SK-N-SH (cell line): ENCODE measurements at regions of chr4 and their contacts with region 1.

Region 1: DNA sequence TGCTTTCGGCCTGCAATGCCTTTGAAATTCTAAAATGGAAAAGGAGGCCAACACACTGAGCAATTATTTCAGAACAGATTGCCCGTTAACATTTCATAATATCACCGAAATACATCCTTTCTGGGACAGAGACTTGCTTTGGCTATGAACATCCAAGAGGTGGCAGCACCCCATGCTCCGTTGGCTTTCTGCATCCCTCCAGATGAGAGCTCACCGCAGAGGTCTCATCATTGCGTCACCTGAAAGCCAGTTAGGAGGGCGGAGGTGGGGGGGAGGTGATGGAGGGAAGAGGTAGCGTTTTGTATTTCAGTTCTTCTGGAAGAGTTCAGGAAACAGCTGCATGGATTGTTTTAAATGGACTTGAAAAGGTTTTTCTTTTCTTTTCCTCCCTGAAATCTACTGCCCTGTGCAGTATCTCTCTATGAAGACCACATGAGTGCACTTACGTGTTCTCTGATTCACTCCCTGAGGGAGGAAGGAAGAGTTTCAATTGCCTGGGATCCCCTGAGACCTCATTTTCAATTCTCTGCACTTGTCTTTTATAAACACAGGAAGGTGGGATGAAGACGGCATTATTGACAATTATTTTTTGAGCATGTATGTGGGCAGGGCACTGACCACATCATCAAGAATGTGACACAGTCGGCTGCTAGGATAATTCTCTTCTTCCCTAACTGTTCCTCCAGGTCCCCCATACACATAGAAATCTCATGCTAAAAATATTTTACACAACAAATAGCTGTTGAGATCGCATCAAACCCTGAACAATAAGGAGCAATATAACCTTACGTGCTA is 166.9 kb upstream of the PGRMC2 start:
- DNase-seq: peak; percentile 79
- H3K4me3 ChIP-seq: no peak overlapping the region; a peak in 1 of 4 replicates
- H3K27ac ChIP-seq: peak overlapping the region; percentile 62 to 63
- H3K4me1 ChIP-seq: peaks cover 9 to 19% of the 10 kb centered on the region in 2 experiments; a peak in 3 of 4 replicates
- H3K27me3 ChIP-seq: no peaks in the 10 kb centered on the region
- CTCF ChIP-seq: peak; percentile 92
- EP300 ChIP-seq: peak; percentile 7 to 62; a peak in 1 of 4 replicates
- RAD21 ChIP-seq: peak; percentile 94

Region 2: DNA sequence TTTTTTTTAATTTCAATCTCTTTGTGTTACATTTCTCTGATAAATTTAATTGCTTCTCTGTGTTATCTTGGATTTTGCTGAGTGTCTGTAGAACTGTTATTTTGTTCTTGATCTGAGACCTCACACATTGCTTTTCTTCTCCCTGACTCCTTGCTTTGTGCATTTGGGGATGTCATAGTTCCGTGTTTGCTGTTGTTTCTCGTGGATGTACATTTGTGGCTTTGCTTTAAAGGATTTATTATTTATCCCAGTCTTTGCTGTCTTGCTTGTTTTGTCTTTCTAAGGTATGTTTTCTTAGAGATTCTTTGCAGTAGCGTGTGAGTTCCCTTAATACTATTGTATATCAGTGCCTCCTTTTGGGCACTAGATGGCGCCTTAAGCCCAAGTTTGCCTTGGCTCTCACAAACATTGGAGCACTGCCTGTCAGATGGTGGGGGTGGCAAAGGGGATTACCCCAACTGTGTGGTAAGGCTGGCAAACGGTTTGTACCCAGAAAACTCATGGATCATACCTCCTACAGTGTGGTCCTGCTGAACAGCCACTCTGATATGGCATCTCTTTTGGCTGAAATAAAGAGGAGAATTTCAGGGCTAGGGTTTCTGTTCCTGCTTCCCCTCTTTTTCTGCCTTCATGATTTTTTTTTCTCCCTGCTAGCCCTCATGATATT is 263.2 kb before region 1 on chr4:
- CTCF ChIA-PET with region 1: interaction called, 10 read pairs
- POLR2A ChIA-PET with region 1: no interaction called
- DNase-seq: peak; percentile 63
- H3K4me3 ChIP-seq: peak overlapping the region in 1 of 2 experiments; percentile 31; a peak in 1 of 4 replicates
- H3K27ac ChIP-seq: no peak overlapping the region
- H3K4me1 ChIP-seq: peaks cover 0 to 7% of the 10 kb centered on the region in 2 experiments; a peak in 3 of 4 replicates
- H3K27me3 ChIP-seq: no peaks in the 10 kb centered on the region
- CTCF ChIP-seq: peak; percentile 95
- EP300 ChIP-seq: no peak
- RAD21 ChIP-seq: peak; percentile 95

Region 3: GRCh38 chr4:128386761-128387599 is 67.5 kb before region 1 on chr4:
- CTCF ChIA-PET with region 1: interaction called, 12 read pairs
- POLR2A ChIA-PET with region 1: no interaction called
- DNase-seq: peak; percentile 67
- H3K4me3 ChIP-seq: no peak overlapping the region; a peak in 2 of 4 replicates
- H3K27ac ChIP-seq: peak overlapping the region; percentile 86 to 99
- H3K4me1 ChIP-seq: peaks cover 38 to 44% of the 10 kb centered on the region in 2 experiments
- H3K27me3 ChIP-seq: no peaks in the 10 kb centered on the region
- CTCF ChIP-seq: 0 out of 2 replicates have a peak, but pooled peaks have one; percentile 16
- EP300 ChIP-seq: peak; percentile 67 to 97
- RAD21 ChIP-seq: peak; percentile 43

Region 4: GRCh38 chr4:128468123-128468989 is 13.9 kb after region 1 on chr4:
- CTCF ChIA-PET with region 1: interaction called, 50 read pairs
- POLR2A ChIA-PET with region 1: no interaction called
- DNase-seq: peak; percentile 37
- H3K4me3 ChIP-seq: no peak overlapping the region; a peak in 1 of 4 replicates
- H3K27ac ChIP-seq: peak overlapping the region; percentile 72 to 74
- H3K4me1 ChIP-seq: peaks cover 8 to 12% of the 10 kb centered on the region in 2 experiments; a peak in 3 of 4 replicates
- H3K27me3 ChIP-seq: no peaks in the 10 kb centered on the region
- CTCF ChIP-seq: no peak
- EP300 ChIP-seq: no peak
- RAD21 ChIP-seq: no peak

Region 5: GRCh38 chr4:128553686-128554515 is 99.4 kb after region 1 on chr4:
- CTCF ChIA-PET with region 1: interaction called, 34 read pairs
- POLR2A ChIA-PET with region 1: interaction called, 17 read pairs
- DNase-seq: peak; percentile 12
- H3K4me3 ChIP-seq: peak overlapping the region; percentile 51 to 66
- H3K27ac ChIP-seq: peak overlapping the region; percentile 93 to 99
- H3K4me1 ChIP-seq: peaks cover 12 to 32% of the 10 kb centered on the region in 2 experiments
- H3K27me3 ChIP-seq: no peaks in the 10 kb centered on the region
- CTCF ChIP-seq: no peak
- EP300 ChIP-seq: no peak; a peak in 1 of 4 replicates
- RAD21 ChIP-seq: no peak

Region 6: DNA sequence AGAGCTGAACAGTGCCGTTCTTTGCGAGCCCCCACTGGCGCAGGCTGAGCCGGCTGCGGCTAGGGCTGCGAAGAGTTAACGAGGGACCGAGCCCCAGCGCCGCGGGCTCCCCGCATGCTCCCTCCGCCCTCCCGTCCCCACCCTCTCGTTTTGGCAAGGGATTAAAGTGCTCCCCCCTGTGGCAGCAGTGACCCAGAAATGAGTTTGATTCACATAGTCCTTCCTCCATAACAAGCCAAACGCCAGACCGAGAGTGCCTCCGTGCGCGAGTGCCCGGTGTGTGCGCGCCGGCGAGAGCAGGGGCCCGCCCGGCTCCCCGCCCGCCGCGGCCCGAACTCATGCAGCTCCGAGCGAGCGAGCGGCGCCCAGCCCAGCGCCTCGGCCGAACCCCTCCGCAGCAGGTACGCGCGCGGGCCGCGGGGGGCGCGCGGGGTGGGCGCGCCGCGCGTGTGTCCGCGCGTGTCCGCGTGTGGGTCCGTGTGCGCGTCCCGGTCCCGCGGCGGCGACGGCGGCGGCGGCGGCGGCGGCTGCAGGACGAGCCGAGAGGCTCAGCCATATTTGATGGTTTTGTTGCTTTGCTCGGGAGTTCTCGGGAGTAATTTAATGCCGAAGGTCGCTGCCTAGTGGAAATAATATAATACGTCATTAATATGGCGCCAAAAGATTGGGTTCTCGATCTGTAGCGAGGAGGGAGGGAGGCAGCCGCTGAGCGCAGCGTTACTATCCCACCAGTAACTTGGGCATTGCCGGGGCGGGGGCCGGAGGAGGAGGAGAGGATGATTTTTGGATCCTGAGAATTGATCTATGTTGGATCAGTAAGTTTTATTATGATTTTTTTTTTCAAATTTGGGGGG is 355.2 kb after region 1 on chr4 and contains the start of gene JADE1:
- CTCF ChIA-PET with region 1: interaction called, 22 read pairs
- POLR2A ChIA-PET with region 1: interaction called, 4 read pairs
- DNase-seq: peak; percentile 92
- H3K4me3 ChIP-seq: peak within 1 kb of the TSS; percentile 88 to 97
- H3K27ac ChIP-seq: peak within 1 kb of the TSS; percentile 94 to 97
- H3K4me1 ChIP-seq: peaks cover 4 to 7% of the 10 kb centered on the region in 2 experiments; a peak in 3 of 4 replicates
- H3K27me3 ChIP-seq: no peaks in the 10 kb centered on the region
- CTCF ChIP-seq: peak; percentile 69
- EP300 ChIP-seq: no peak; a peak in 1 of 4 replicates
- RAD21 ChIP-seq: peak; percentile 88
- polyA plus RNA-seq, gene JADE1: 9.1 and 10.9 TPM in 2 replicates

Region 7: DNA sequence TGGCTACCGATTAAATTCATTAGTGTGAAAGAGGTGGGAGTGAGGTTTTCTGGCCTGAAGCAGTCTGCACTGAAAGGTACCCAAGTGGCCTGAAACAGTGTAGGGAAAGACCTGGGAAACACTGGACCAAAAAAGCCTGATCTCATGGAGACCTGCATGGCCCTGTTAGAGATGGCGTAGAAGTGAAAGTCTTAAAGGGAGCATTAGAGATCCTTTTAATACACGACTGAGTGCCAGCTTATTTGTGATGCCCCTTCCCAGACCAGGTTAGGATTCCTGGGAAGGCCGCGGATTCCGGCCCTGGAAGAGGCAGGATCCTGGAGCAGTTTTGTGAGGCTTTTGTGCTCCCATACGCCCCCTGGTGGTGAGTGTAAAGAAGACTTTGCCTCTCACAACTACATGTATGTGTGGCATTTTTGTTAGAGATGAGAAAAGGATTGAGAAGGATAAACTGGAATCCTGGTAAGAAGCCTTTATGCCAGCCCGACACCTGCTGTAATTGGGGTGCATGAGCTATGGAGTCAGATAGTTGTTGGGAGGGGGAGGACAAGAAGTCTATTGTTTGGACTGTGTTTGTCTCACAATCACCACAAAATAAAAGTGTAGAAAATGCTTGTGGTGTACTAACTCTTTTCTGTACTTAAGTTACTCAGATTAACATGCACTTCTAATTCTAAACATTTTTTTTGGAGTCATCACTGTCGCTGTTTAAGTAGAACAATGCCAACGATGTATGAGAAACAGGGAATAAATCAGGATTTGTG is 409.0 kb after region 1 on chr4:
- CTCF ChIA-PET with region 1: interaction called, 15 read pairs
- POLR2A ChIA-PET with region 1: no interaction called
- DNase-seq: peak; percentile 70
- H3K4me3 ChIP-seq: peak overlapping the region in 1 of 2 experiments; percentile 21; a peak in 1 of 4 replicates
- H3K27ac ChIP-seq: peak overlapping the region in 1 of 2 experiments; percentile 12; a peak in 1 of 4 replicates
- H3K4me1 ChIP-seq: peaks cover 0 to 23% of the 10 kb centered on the region in 2 experiments; a peak in 1 of 4 replicates
- H3K27me3 ChIP-seq: no peaks in the 10 kb centered on the region
- CTCF ChIP-seq: peak; percentile 91
- EP300 ChIP-seq: no peak
- RAD21 ChIP-seq: peak; percentile 80